Naive thymus-derived CD4-positive, alpha-beta T cell (primary cell): ENCODE measurements at regions of chr15 and their contacts with region 1.

Region 1: GRCh38 chr15:76905013-76905839 is at the start of gene SCAPER:
- DNase-seq: peak; percentile 84 to 94 (median 90)
- ATAC-seq: peak; percentile 95
- H3K4me3 ChIP-seq: peak within 1 kb of the TSS; percentile 64
- H3K4me3 Mint-ChIP-seq: peak within 1 kb of the TSS; percentile 86 to 96 (median 94)
- H3K27ac ChIP-seq: peak within 1 kb of the TSS; percentile 84
- H3K27ac Mint-ChIP-seq: peak within 1 kb of the TSS; percentile 93 to 99 (median 97)
- H3K4me1 ChIP-seq: peaks cover 8 to 26% of the 10 kb centered on the region in 2 donors
- H3K4me1 Mint-ChIP-seq: peaks cover 18 to 43% (median 36%) of the 10 kb centered on the region in 7 donors
- H3K27me3 ChIP-seq: no peaks in the 10 kb centered on the region
- H3K27me3 Mint-ChIP-seq: no peaks in the 10 kb centered on the region
- total RNA-seq, gene SCAPER: 25.1 to 56.9 (median 54.7) TPM

Region 2: GRCh38 chr15:76931397-76932007 is 26.3 kb after region 1 on chr15 and contains the start of gene RCN2:
- CTCF ChIA-PET with region 1: no interaction called
- POLR2A ChIA-PET with region 1: interaction called, 28 read pairs
- intact Hi-C with region 1: loop called (anchors 1 kb)
- DNase-seq: peak; percentile 81 to 95 (median 88)
- ATAC-seq: peak; percentile 99
- H3K4me3 ChIP-seq: peak within 1 kb of the TSS; percentile 70
- H3K4me3 Mint-ChIP-seq: peak within 1 kb of the TSS; percentile 89 to 95 (median 92)
- H3K27ac ChIP-seq: peak within 1 kb of the TSS; percentile 73
- H3K27ac Mint-ChIP-seq: peak within 1 kb of the TSS; percentile 76 to 96 (median 91)
- H3K4me1 ChIP-seq: peaks cover 4 to 14% of the 10 kb centered on the region in 2 donors
- H3K4me1 Mint-ChIP-seq: peaks cover 19 to 42% (median 33%) of the 10 kb centered on the region in 7 donors
- H3K27me3 ChIP-seq: no peaks in the 10 kb centered on the region
- H3K27me3 Mint-ChIP-seq: peaks cover 0 to 20% (median 0%) of the 10 kb centered on the region in 5 donors
- total RNA-seq, gene RCN2: 16.7 to 30.5 (median 28.1) TPM

Region 3: DNA sequence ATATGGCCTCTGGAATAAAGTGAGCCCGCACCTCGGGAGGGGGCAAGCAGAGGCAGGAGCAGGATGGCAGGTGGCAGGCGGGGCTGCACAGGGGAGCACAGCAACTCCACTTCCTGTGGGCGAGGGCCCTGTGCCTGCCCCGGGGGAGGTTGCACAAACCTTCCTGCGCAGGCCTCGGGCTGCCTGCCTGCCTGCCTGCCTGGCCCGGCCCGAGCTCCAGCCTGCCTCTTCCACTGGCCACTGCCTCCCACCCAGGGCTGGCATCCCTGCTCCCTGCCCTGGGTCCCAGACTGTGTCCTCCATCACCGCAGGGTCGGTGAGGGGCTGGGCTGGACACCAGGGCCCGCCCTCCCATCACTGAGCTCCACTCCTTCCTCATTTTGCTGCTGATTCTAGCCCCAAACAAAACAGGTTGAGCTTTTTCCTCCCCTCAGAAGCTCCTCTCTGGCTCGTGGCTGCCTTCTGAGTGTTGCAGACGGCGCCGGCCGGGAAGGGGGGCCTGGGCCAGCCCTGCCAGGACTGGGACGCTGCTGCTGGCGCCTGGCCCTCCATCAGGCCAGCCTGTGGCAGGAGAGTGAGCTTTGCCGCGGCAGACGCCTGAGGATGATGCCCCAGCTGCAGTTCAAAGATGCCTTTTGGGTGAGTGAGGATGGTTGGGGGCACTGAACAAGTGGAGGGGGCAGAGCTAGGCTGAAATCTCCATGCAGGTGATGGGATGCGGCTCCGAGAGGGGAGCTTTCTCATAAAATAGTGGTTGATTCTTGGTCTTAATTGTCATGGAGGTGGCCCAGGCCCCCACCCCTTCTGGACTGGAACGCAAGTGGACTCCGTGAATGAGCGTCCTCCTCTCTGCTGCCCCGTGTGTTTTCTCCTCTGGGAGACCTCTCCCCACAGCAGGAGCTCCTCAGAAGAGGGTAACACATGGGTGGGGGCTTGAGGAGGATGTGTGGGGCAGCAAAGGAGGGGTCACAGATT is 90.0 kb after region 1 on chr15 and contains the start of gene PSTPIP1:
- CTCF ChIA-PET with region 1: no interaction called
- POLR2A ChIA-PET with region 1: interaction called, 9 read pairs
- intact Hi-C with region 1: loop called (anchors 1 to 2 kb)
- DNase-seq: peak; percentile 52 to 79 (median 74)
- ATAC-seq: peak; percentile 83
- H3K4me3 ChIP-seq: peak within 1 kb of the TSS; percentile 90
- H3K4me3 Mint-ChIP-seq: peak within 1 kb of the TSS; percentile 93 to 99 (median 96)
- H3K27ac ChIP-seq: peak within 1 kb of the TSS; percentile 80
- H3K27ac Mint-ChIP-seq: peak within 1 kb of the TSS; percentile 88 to 98 (median 96)
- H3K4me1 ChIP-seq: peaks cover 57 to 58% of the 10 kb centered on the region in 2 donors
- H3K4me1 Mint-ChIP-seq: peaks cover 61 to 76% (median 65%) of the 10 kb centered on the region in 7 donors
- H3K27me3 ChIP-seq: no peaks in the 10 kb centered on the region
- H3K27me3 Mint-ChIP-seq: no peaks in the 10 kb centered on the region
- total RNA-seq, gene PSTPIP1: 101 to 182 (median 146) TPM

Region 4: DNA sequence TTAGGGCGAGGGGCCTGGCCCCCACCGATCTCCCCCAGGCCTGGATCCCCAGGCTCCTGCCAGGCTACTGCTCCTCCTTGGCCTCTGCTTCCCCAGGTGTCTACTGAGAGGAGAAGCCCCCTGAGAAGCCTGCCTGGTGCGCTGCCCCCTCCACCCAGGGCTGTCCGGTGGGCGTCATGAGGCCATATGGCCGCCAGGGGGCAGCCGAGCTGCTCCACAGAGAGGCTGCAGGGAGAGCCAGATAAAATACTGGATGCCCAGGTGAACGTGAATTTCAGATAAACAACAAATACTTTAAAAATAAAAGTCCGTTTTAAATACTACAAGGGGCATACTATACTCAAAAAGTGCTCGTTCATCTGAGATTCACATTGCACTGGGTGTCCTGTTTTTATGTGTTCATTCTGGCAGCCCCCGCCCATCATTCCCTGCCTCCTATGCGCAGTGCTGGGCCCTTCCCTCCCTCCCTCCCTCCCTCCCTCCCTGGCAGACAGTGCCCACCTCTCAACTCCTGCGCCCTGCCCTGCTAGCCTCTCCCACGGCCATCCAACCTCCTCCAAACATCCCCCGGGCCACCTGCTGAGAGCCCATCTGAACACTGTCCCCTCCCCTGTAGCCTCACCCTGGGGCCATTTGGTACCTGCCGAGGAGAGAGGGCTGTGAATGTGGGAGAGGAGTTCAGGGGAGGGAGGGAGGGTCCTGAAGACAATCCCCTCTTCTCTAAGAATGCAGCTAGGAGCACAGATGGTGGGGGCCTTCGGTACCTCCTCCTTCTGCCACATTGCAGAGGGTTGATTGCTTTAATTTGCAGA is 119.3 kb after region 1 on chr15:
- CTCF ChIA-PET with region 1: no interaction called
- POLR2A ChIA-PET with region 1: no interaction called
- intact Hi-C with region 1: loop called (anchors 2 to 5 kb)
- DNase-seq: peak; percentile 35 to 74 (median 61)
- ATAC-seq: peak; percentile 64
- H3K4me3 ChIP-seq: no peak overlapping the region
- H3K4me3 Mint-ChIP-seq: peak overlapping the region in 2 of 10 donors; percentile 19 to 21
- H3K27ac ChIP-seq: peak overlapping the region; percentile 50
- H3K27ac Mint-ChIP-seq: peak overlapping the region in 8 of 9 donors; percentile 36 to 99 (median 86)
- H3K4me1 ChIP-seq: peaks cover 30 to 51% of the 10 kb centered on the region in 2 donors
- H3K4me1 Mint-ChIP-seq: peaks cover 33 to 59% (median 44%) of the 10 kb centered on the region in 7 donors
- H3K27me3 ChIP-seq: no peaks in the 10 kb centered on the region
- H3K27me3 Mint-ChIP-seq: no peaks in the 10 kb centered on the region

Region 5: GRCh38 chr15:77070495-77071304 is 165.5 kb after region 1 on chr15 and contains the start of gene TSPAN3:
- CTCF ChIA-PET with region 1: no interaction called
- POLR2A ChIA-PET with region 1: no interaction called
- intact Hi-C with region 1: loop called in 1 of 2 experiments (anchors 2 kb)
- DNase-seq: peak; percentile 88 to 93 (median 92)
- ATAC-seq: peak; percentile 99
- H3K4me3 ChIP-seq: peak within 1 kb of the TSS; percentile 50
- H3K4me3 Mint-ChIP-seq: peak within 1 kb of the TSS; percentile 81 to 90 (median 86)
- H3K27ac ChIP-seq: peak within 1 kb of the TSS; percentile 62
- H3K27ac Mint-ChIP-seq: peak within 1 kb of the TSS; percentile 54 to 93 (median 80)
- H3K4me1 ChIP-seq: peaks cover 5 to 14% of the 10 kb centered on the region in 2 donors
- H3K4me1 Mint-ChIP-seq: peaks cover 7 to 48% (median 29%) of the 10 kb centered on the region in 7 donors
- H3K27me3 ChIP-seq: peaks cover 0 to 2% of the 10 kb centered on the region in 2 donors
- H3K27me3 Mint-ChIP-seq: peaks cover 0 to 22% (median 0%) of the 10 kb centered on the region in 5 donors
- total RNA-seq, gene TSPAN3: 17.5 to 24.4 (median 21.7) TPM

Region 6: GRCh38 chr15:77496710-77497103 is 591.5 kb after region 1 on chr15:
- CTCF ChIA-PET with region 1: interaction called, 3 read pairs
- POLR2A ChIA-PET with region 1: no interaction called
- intact Hi-C with region 1: loop called in 1 of 2 experiments (anchors 1 kb)
- DNase-seq: peak; percentile 37 to 76 (median 60)
- ATAC-seq: peak; percentile 84
- H3K4me3 ChIP-seq: no peak overlapping the region
- H3K4me3 Mint-ChIP-seq: no peak overlapping the region
- H3K27ac ChIP-seq: no peak overlapping the region
- H3K27ac Mint-ChIP-seq: no peak overlapping the region
- H3K4me1 ChIP-seq: peaks cover 3 to 5% of the 10 kb centered on the region in 2 donors
- H3K4me1 Mint-ChIP-seq: peaks cover 13 to 29% (median 24%) of the 10 kb centered on the region in 7 donors
- H3K27me3 ChIP-seq: no peaks in the 10 kb centered on the region
- H3K27me3 Mint-ChIP-seq: no peaks in the 10 kb centered on the region